ENCODE measurements at regions of chr7 and their contacts with region 1.

Region 1: GRCh38 chr7:102390697-102391484 is 5.3 kb upstream of the PRKRIP1 start:
- DNase-seq: peak; percentile 34
- H3K4me3 ChIP-seq: no peak overlapping the region
- H3K27ac ChIP-seq: no peak overlapping the region
- H3K27me3 ChIP-seq: no peaks in the 10 kb centered on the region
- CTCF ChIP-seq: peak; percentile 91

Region 2: GRCh38 chr7:102279537-102280400 is 111.1 kb before region 1 on chr7:
- CTCF ChIA-PET with region 1: interaction called, 20 read pairs
- POLR2A ChIA-PET with region 1: no interaction called
- DNase-seq: no peak
- H3K4me3 ChIP-seq: no peak overlapping the region
- H3K27ac ChIP-seq: no peak overlapping the region
- H3K27me3 ChIP-seq: no peaks in the 10 kb centered on the region
- CTCF ChIP-seq: peak; percentile 89

Measured in AG04450 (cell line).